Heart left ventricle (tissue), 16 donors: ENCODE measurements at regions of chr11 and their contacts with region 1.

Region 1: DNA sequence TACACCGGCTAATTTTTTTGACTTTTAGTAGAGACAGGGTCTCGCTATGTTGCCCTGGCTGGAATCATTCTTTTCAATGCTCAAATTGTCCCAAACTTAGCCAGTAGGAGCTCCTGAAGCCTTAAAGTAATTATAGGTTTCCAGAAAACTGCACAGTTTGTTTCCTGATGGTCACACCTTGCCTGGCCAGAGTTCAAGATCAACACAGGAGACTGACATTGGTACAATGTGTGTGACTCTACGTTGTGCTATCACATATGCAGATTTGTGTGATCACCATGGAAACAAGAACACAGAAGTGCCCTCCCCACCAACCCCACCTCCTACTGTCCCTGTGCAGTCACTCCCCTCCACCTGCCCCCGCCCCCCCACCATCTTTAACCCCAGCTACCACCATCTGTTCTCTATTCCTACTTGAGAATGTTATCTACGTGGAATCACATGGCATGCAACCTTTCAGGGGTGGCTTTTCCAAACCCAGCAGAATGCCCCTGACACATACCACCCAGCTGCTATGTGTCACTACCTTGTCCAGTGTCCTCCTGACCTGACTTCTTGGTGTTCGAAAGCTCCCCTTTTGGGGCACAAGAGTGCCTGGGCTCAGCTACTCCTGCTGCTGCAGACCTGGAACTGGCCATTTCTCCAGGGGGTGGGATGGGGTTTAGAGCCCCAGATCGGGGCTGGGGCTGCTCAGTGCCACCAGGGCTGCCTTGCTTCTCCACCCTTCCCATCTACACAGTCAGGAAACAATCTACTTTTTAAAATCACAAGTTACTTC is 6.1 kb upstream of the NAP1L4 start:
- DNase-seq: no peak
- ATAC-seq: no peak
- H3K4me3 ChIP-seq: no peak overlapping the region
- H3K27ac ChIP-seq: no peak overlapping the region
- H3K4me1 ChIP-seq: peaks cover 0 to 24% (median 11%) of the 10 kb centered on the region in 12 donors
- H3K27me3 ChIP-seq: no peaks in the 10 kb centered on the region
- CTCF ChIP-seq: no peak
- POLR2A ChIP-seq: no peak

Region 2: DNA sequence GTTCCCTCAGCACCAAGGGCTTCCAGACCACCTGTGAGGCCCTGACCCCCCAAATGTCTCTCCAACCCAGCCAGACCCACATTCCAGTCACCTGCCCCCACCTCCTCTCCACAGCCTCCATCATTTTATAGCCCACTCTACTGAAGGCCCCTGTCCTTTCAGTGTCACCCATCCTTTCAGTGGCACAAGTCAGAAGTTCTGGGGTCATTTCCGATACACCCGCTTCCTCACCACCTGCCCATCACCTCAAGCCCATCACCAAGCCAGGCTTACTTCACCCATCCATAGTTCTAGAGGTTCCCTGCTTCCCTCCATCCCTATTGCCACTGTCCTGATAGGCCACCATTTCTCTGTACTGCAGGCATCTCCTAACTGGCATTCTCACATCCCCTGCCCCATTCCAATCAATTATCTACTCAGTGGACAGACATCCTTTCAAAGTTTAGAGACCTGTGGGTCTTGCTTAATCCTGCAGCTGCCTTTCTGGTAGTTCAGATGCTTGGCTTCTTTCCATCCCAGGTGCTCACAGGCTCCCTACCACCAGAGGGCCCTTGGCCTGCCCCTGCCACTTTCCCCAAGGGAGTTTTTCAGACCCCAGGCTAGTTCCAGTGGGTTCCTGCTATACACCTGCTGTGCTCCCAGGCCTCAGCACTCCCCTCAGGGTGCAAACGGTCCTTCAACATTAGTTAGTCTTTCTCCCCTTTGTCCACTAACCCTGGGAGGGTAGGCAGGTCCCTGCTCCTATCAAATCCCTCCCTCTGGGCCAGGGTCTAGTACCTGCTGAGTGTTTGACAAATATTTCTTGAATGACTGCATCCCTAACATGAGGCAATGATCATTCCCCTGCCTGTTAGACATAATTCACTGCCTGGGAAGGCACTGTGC is 306.0 kb before region 1 on chr11:
- intact Hi-C with region 1: loop called in 1 of 10 experiments (anchors 5 kb)
- DNase-seq: no peak
- ATAC-seq: no peak
- H3K4me3 ChIP-seq: no peak overlapping the region
- H3K27ac ChIP-seq: no peak overlapping the region
- H3K4me1 ChIP-seq: peaks cover 0 to 86% (median 43%) of the 10 kb centered on the region in 12 donors
- H3K27me3 ChIP-seq: no peaks in the 10 kb centered on the region
- CTCF ChIP-seq: peak in 2 of 12 donors; percentile 7 to 15
- POLR2A ChIP-seq: no peak

Region 3: GRCh38 chr11:2912498-2912897 is 85.8 kb before region 1 on chr11:
- intact Hi-C with region 1: no loop called
- DNase-seq: no peak
- ATAC-seq: peak in 2 of 4 donors; percentile 0 to 30
- H3K4me3 ChIP-seq: no peak overlapping the region
- H3K27ac ChIP-seq: no peak overlapping the region
- H3K4me1 ChIP-seq: peaks cover 0 to 53% (median 12%) of the 10 kb centered on the region in 12 donors
- H3K27me3 ChIP-seq: peaks cover 0 to 12% (median 0%) of the 10 kb centered on the region in 9 donors
- CTCF ChIP-seq: no peak
- POLR2A ChIP-seq: no peak